B cell (primary cell): ENCODE measurements at regions of chr12 and their contacts with region 1.

Region 1: DNA sequence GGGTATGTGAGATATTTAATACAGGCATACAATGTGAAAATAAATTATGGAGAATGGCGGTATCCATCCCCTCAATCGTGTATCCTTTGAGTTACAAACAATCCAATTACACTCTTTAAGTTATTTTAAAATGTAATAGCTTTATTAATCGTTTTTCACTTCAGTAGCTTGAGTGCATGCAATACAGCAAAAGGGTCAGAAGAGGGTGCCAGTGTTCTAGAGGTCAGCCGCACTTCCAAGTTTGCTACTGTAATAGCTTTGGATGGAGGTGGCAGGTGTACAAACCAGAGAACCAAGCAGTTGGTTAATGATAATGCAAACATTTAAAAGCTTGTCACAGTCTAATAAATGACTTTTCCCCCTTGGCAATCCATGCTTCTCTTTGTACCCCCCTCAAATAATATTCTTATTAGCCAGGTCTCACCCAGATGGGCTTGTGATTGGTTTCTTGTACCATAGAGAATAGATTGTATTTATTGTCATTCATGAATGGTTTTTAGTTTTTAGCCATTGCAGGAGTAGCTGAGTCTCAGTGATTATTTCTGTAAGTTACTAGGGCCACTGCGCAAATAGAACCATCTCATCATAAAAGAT is 127.0 kb downstream of the ERC1 start:
- DNase-seq: peak; percentile 80
- ATAC-seq: peak; percentile 88
- H3K4me3 ChIP-seq: no peak overlapping the region
- H3K4me3 Mint-ChIP-seq: no peak overlapping the region
- H3K27ac ChIP-seq: no peak overlapping the region
- H3K27ac Mint-ChIP-seq: no peak overlapping the region
- H3K4me1 ChIP-seq: no peaks in the 10 kb centered on the region
- H3K4me1 Mint-ChIP-seq: no peaks in the 10 kb centered on the region
- H3K27me3 ChIP-seq: no peaks in the 10 kb centered on the region
- H3K27me3 Mint-ChIP-seq: no peaks in the 10 kb centered on the region
- CTCF ChIP-seq: peak; percentile 98

Region 2: DNA sequence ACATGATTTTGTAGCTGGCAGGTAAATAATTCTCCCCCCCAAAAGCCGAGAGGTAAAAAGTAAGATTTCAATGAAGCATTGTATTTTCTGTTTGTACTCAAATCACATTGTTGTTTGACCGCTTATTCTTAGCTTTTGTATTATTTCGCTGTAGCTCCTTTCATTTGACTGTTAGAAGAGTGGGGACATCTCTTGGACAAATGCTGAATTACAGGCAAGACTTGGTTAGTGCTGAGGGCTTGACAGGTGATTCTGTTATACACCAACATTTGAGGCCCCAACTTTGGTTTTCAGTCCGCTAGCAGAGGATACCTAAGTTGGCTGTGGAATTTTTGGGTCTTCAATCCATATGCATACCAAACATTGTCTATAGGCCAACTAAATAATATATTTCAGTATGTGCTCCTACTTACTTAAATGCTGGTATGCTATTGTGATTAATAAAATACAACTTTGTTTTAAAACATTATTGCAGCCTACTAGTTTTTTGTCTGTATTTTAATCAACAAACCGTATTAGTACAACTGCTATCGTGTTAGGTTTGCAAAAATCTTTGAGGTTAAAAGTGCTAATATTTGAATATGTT is 24.8 kb before region 1 on chr12:
- CTCF ChIA-PET with region 1: interaction called, 11 read pairs
- POLR2A ChIA-PET with region 1: no interaction called
- intact Hi-C with region 1: no loop called
- DNase-seq: peak; percentile 65
- ATAC-seq: peak; percentile 67
- H3K4me3 ChIP-seq: no peak overlapping the region
- H3K4me3 Mint-ChIP-seq: no peak overlapping the region
- H3K27ac ChIP-seq: no peak overlapping the region
- H3K27ac Mint-ChIP-seq: no peak overlapping the region
- H3K4me1 ChIP-seq: no peaks in the 10 kb centered on the region
- H3K4me1 Mint-ChIP-seq: peaks cover 1% of the 10 kb centered on the region
- H3K27me3 ChIP-seq: no peaks in the 10 kb centered on the region
- H3K27me3 Mint-ChIP-seq: no peaks in the 10 kb centered on the region
- CTCF ChIP-seq: peak; percentile 76

Region 3: DNA sequence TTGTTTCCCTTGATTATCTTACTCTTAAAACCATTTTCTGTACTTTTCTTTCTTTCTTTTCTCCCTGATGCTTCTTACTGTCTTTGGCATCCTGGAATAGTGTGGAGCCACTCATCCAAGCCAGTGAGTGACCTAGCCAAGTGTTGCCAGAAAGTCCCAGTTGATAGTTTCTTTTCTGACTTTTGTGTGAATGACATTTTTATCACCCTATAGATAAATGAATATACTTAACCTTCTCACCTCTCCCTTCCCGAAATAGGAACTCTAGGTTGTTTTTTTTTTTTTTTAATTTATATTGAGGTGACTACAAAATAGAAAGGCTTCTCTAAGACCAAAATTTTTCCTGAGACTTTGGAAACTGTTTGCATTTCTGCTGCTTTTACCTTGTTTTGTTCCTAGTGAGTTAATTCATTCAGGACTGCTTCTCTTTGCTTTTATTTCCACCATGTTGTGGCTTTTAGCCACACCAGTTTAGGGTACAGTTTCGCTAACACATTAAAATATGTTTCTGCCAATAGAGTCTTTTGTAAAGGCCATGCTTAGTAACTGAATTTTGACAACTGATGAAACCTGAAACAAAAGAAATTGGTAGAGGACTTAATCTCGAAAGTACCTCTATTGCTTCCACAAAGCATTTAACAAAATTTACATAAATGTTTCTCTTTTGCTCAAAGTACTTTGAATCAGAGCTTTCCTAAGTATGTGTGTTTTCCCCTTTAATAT is 67.6 kb after region 1 on chr12:
- CTCF ChIA-PET with region 1: interaction called, 11 read pairs
- POLR2A ChIA-PET with region 1: no interaction called
- intact Hi-C with region 1: no loop called
- DNase-seq: no peak
- ATAC-seq: no peak
- H3K4me3 ChIP-seq: no peak overlapping the region
- H3K4me3 Mint-ChIP-seq: no peak overlapping the region
- H3K27ac ChIP-seq: no peak overlapping the region
- H3K27ac Mint-ChIP-seq: no peak overlapping the region
- H3K4me1 ChIP-seq: no peaks in the 10 kb centered on the region
- H3K4me1 Mint-ChIP-seq: peaks cover 2% of the 10 kb centered on the region
- H3K27me3 ChIP-seq: no peaks in the 10 kb centered on the region
- H3K27me3 Mint-ChIP-seq: no peaks in the 10 kb centered on the region
- CTCF ChIP-seq: no peak

Region 4: DNA sequence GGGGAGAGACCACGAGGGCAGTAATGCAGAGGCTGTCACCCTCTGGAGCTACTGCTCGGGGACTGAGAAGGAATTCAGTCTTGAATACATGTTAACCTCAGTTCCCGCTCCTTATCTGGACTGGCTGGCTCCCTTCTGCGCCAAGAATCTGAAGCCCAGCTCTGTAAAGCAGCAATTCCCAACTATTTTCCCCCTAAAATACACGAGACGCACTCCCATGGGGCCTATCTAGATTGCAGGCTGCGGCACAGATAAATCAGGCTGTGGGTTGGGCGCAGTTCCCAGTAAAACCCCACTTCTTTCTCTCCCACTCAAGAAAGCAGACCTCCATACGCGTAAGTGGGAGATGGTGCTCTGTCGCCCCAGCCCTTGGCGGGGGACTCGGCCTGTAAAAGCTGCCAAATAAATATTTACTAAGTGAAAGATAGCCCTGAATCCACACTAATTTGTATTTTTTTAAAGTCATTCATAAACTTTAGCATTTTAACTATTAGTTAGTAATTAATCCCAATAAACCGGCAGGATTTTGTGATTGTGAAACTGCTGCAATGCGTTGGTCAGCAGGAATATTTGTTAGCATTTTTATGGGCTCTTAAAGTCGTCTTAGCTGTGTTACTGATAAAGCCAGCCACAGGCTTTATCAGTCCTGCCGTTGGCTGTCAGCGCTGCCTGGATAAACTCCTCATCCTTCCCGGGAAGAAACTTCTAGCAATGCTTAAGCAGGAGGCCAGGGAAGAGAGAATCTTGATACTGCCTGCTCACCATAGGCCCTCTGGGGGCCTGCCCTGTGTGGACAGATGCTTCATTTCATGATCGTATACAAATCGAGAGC is 458.6 kb after region 1 on chr12:
- CTCF ChIA-PET with region 1: interaction called, 256 read pairs
- POLR2A ChIA-PET with region 1: no interaction called
- intact Hi-C with region 1: no loop called
- DNase-seq: no peak
- ATAC-seq: no peak
- H3K4me3 ChIP-seq: no peak overlapping the region
- H3K4me3 Mint-ChIP-seq: no peak overlapping the region
- H3K27ac ChIP-seq: no peak overlapping the region
- H3K27ac Mint-ChIP-seq: no peak overlapping the region
- H3K4me1 ChIP-seq: no peaks in the 10 kb centered on the region
- H3K4me1 Mint-ChIP-seq: peaks cover 2% of the 10 kb centered on the region
- H3K27me3 ChIP-seq: no peaks in the 10 kb centered on the region
- H3K27me3 Mint-ChIP-seq: no peaks in the 10 kb centered on the region
- CTCF ChIP-seq: no peak

Region 5: GRCh38 chr12:1594261-1595025 is 476.4 kb after region 1 on chr12 and contains the start of gene FBXL14:
- CTCF ChIA-PET with region 1: interaction called, 54 read pairs
- POLR2A ChIA-PET with region 1: interaction called, 3 read pairs
- intact Hi-C with region 1: no loop called
- DNase-seq: peak; percentile 95
- ATAC-seq: peak; percentile 65
- H3K4me3 ChIP-seq: peak within 1 kb of the TSS; percentile 59 to 81 (median 73)
- H3K4me3 Mint-ChIP-seq: peak within 1 kb of the TSS; percentile 94
- H3K27ac ChIP-seq: peak within 1 kb of the TSS; percentile 80 to 96
- H3K27ac Mint-ChIP-seq: peak within 1 kb of the TSS; percentile 97
- H3K4me1 ChIP-seq: peaks cover 38 to 41% of the 10 kb centered on the region in 2 donors
- H3K4me1 Mint-ChIP-seq: peaks cover 50% of the 10 kb centered on the region
- H3K27me3 ChIP-seq: no peaks in the 10 kb centered on the region
- H3K27me3 Mint-ChIP-seq: no peaks in the 10 kb centered on the region
- CTCF ChIP-seq: no peak
- total RNA-seq, gene FBXL14: 33.9 and 37.3 TPM in 2 replicates

Region 6: GRCh38 chr12:1634590-1635191 is 516.6 kb after region 1 on chr12:
- CTCF ChIA-PET with region 1: interaction called, 32 read pairs
- POLR2A ChIA-PET with region 1: no interaction called
- intact Hi-C with region 1: loop called (anchors 1 kb)
- DNase-seq: peak; percentile 69
- ATAC-seq: peak; percentile 50
- H3K4me3 ChIP-seq: no peak overlapping the region
- H3K4me3 Mint-ChIP-seq: no peak overlapping the region
- H3K27ac ChIP-seq: no peak overlapping the region
- H3K27ac Mint-ChIP-seq: no peak overlapping the region
- H3K4me1 ChIP-seq: peaks cover 19 to 20% of the 10 kb centered on the region in 2 donors
- H3K4me1 Mint-ChIP-seq: peaks cover 19% of the 10 kb centered on the region
- H3K27me3 ChIP-seq: peaks cover 0 to 52% (median 31%) of the 10 kb centered on the region in 4 experiments
- H3K27me3 Mint-ChIP-seq: peaks cover 30% of the 10 kb centered on the region
- CTCF ChIP-seq: peak; percentile 91